Heart right ventricle (tissue), 16 donors: ENCODE measurements at regions of chr9 and their contacts with region 1.

Region 1: GRCh38 chr9:130770679-130771442 is 64.2 kb upstream of the ABL1 start:
- DNase-seq: no peak
- ATAC-seq: peak; percentile 44 to 78 (median 74)
- H3K4me3 ChIP-seq: no peak overlapping the region
- H3K27ac ChIP-seq: no peak overlapping the region
- H3K4me1 ChIP-seq: peaks cover 0 to 42% (median 28%) of the 10 kb centered on the region in 9 donors
- H3K27me3 ChIP-seq: no peaks in the 10 kb centered on the region
- CTCF ChIP-seq: peak; percentile 39 to 83 (median 68)

Region 2: DNA sequence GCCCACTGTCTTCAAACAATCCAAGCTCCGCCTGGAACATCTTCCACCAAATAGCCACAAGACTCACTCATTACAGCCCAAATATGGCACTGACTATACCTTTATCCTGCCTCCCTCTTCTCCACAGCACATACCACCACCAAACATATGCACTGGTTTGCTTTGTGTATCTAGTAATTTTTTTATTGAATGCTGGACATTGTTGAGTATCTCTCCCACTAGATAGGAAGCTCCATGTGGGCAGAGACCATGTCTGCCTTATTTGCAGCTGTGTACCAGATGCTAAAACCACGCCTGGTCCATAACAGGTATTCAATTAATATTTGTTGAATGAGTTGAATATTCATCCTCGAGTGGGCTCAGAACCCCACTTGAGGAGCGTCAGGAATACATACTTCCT is 258.7 kb before region 1 on chr9:
- intact Hi-C with region 1: no loop called
- DNase-seq: no peak
- ATAC-seq: no peak
- H3K4me3 ChIP-seq: no peak overlapping the region
- H3K27ac ChIP-seq: no peak overlapping the region
- H3K4me1 ChIP-seq: no peaks in the 10 kb centered on the region
- H3K27me3 ChIP-seq: no peaks in the 10 kb centered on the region
- CTCF ChIP-seq: no peak

Region 3: DNA sequence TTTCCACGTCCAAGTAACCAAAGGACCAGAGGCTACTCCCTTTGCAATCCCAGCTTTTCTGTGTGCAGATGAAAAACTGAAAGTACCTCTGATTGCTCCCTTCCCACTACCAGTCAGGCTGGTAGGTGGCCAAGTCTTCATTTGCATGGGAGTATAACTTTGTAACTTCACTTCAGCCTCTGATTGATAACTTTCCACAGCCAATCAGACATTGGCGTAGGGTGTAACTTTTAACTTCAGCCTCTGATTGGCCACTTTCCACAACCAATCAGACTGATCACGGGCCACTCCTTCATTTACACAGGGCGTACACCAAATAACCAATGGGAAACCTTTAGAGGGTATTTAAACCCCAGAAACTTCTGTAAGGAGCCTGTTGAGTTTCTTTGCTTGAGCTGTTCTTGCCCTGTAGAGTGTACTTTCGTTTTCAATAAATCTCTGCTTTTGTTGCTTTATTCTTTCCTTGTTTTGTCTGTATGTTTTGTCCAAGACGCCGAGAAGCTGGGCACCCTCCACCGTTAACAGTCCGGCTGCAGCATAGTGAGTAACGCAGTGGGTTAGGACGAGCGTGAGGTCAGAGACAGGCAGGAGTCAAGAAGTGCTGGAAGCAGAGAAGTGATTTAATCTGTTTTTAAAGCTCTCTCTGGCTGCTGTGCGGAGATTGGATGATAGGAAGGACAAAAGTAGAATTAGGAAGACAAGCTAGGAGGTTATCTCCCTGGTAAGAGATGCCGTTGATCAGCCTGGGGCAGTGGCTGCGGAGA is 80.7 kb before region 1 on chr9:
- intact Hi-C with region 1: no loop called
- DNase-seq: peak in 1 of 2 donors; percentile 82
- ATAC-seq: peak in 7 of 8 donors; percentile 34 to 67 (median 41)
- H3K4me3 ChIP-seq: peak overlapping the region in 7 of 10 donors; percentile 12 to 46 (median 40)
- H3K27ac ChIP-seq: peak overlapping the region in 3 of 10 donors; percentile 30 to 50 (median 42)
- H3K4me1 ChIP-seq: peaks cover 0 to 28% (median 18%) of the 10 kb centered on the region in 9 donors
- H3K27me3 ChIP-seq: no peaks in the 10 kb centered on the region
- CTCF ChIP-seq: no peak

Region 4: GRCh38 chr9:130707225-130707976 is 63.5 kb before region 1 on chr9:
- intact Hi-C with region 1: loop called in 9 of 10 experiments (anchors 2 to 10 kb)
- DNase-seq: peak in 1 of 2 donors; percentile 74
- ATAC-seq: peak in 4 of 8 donors; percentile 18 to 41 (median 28)
- H3K4me3 ChIP-seq: no peak overlapping the region
- H3K27ac ChIP-seq: no peak overlapping the region
- H3K4me1 ChIP-seq: peaks cover 0 to 8% (median 4%) of the 10 kb centered on the region in 9 donors
- H3K27me3 ChIP-seq: no peaks in the 10 kb centered on the region
- CTCF ChIP-seq: peak; percentile 66 to 90 (median 79)

Region 5: DNA sequence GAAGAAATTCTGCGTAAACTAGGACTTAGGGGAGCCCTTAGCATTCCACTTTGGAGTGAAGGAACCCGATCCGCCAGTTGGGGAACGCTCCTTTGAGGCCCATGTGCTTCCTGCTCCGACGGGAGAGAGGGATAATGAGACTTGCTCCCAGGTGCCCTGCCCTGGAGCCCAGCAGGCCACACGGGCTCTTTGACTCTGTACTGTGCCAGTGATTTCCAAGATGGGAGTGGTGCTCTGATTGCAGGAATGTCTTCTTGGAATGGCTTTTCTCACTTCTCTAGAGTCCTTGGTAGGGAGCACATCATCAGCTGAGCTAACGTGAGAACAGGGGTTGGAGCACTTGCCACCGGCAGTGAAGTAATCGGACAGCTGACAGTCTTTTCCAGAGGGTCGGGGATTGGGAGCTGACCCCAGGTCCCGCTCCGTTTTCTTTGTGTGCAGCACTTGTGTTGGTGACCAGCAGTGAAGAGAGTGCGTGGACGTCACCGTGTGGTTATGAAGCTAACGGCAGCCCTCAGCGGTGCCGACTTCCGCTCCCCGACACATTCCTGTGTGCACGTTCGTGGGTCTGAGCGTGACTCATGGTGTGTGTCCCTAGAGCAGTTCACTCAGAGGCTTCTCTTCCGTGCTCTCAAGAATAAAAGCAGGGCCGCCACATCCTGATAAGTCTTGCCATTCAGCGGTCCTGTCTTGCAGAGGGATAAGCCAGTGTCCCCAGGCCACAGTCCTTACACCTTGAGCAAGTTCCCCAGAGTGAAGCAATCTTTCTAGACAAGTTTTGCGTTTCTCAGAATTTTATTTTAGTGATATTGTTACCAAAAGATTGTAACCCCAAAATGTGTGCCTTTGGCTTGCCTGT is 89.8 kb after region 1 on chr9:
- intact Hi-C with region 1: loop called (anchors 1 to 5 kb)
- DNase-seq: peak; percentile 79 to 88
- ATAC-seq: peak; percentile 89 to 95 (median 94)
- H3K4me3 ChIP-seq: peak overlapping the region in 5 of 10 donors; percentile 0 to 14 (median 6)
- H3K27ac ChIP-seq: peak overlapping the region in 9 of 10 donors; percentile 50 to 86 (median 75)
- H3K4me1 ChIP-seq: peaks cover 13 to 69% (median 45%) of the 10 kb centered on the region in 9 donors
- H3K27me3 ChIP-seq: no peaks in the 10 kb centered on the region
- CTCF ChIP-seq: peak in 8 of 9 donors; percentile 36 to 81 (median 58)

Region 6: DNA sequence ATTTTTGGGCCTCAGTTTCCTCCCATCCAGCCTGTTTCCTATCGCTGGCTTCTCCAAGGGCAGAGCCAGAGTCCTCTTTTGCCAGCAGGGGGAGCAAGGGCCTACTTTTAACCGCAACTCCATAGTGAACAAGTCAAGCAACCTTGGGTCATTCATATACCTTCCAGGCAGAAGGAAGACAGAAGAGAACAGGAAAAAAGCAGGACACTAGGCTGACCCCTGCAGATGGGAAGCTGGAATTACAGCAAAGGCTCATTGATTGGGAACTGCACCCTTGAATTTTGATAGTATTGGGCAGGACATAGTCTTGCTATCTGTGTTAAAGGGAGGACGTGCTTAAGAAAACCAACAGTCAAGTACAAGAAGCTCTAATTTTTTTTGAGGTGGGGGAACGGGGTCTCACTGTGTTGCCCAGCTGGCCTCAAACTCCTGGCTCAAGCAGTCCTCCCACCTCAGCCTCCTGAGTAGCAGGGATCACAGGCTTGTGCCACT is 95.7 kb after region 1 on chr9:
- intact Hi-C with region 1: loop called in 9 of 10 experiments (anchors 1 to 5 kb)
- DNase-seq: peak in 1 of 2 donors; percentile 75
- ATAC-seq: peak in 5 of 8 donors; percentile 43 to 56 (median 47)
- H3K4me3 ChIP-seq: no peak overlapping the region
- H3K27ac ChIP-seq: peak overlapping the region in 1 of 10 donors; percentile 2
- H3K4me1 ChIP-seq: peaks cover 0 to 74% (median 36%) of the 10 kb centered on the region in 9 donors
- H3K27me3 ChIP-seq: no peaks in the 10 kb centered on the region
- CTCF ChIP-seq: peak; percentile 63 to 85 (median 77)